ENCODE measurements at regions of chr6 and their contacts with region 1.

Region 1: DNA sequence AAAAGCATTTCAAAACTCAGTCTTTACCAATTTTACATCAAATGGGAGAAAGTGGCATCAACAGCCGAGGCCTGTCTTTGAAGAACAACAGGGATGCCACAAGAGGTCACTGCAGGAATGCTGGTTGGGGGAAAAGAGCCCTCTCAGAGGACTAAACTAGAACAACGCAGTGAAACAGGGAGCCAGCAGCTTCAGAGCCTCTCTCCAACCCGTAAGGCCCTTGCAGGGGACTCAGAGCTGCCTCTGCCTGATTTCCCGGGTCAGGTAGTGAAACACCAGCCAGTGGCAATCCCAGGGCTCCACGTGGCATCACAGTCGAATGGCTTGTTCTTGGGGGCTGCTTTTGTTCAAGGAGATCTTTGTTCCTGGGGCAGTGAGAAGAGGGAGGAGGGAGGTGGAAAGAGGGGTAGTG is 55.0 kb upstream of the KCNK16 start:
- DNase-seq: peak; percentile 42
- H3K4me3 ChIP-seq: no peak overlapping the region
- H3K27ac ChIP-seq: no peak overlapping the region
- H3K4me1 ChIP-seq: no peaks in the 10 kb centered on the region
- H3K27me3 ChIP-seq: no peaks in the 10 kb centered on the region
- CTCF ChIP-seq: peak; percentile 74 to 90

Region 2: GRCh38 chr6:39342692-39343395 is 34.7 kb before region 1 on chr6:
- CTCF ChIA-PET with region 1: no interaction called
- dilution Hi-C with region 1: no loop called
- in situ Hi-C with region 1: no loop called
- intact Hi-C with region 1: no loop called
- DNase-seq: no peak
- H3K4me3 ChIP-seq: no peak overlapping the region
- H3K27ac ChIP-seq: no peak overlapping the region
- H3K4me1 ChIP-seq: peaks cover 14% of the 10 kb centered on the region
- H3K27me3 ChIP-seq: no peaks in the 10 kb centered on the region
- CTCF ChIP-seq: no peak

Region 3: GRCh38 chr6:39865011-39865888 is 487.7 kb after region 1 on chr6:
- CTCF ChIA-PET with region 1: no interaction called
- dilution Hi-C with region 1: no loop called
- in situ Hi-C with region 1: no loop called
- intact Hi-C with region 1: loop called (anchors 1 kb)
- DNase-seq: peak; percentile 31
- H3K4me3 ChIP-seq: no peak overlapping the region
- H3K27ac ChIP-seq: no peak overlapping the region
- H3K4me1 ChIP-seq: no peaks in the 10 kb centered on the region
- H3K27me3 ChIP-seq: no peaks in the 10 kb centered on the region
- CTCF ChIP-seq: peak; percentile 69 to 82

Region 4: GRCh38 chr6:39887381-39888070 is 510.0 kb after region 1 on chr6:
- CTCF ChIA-PET with region 1: no interaction called
- dilution Hi-C with region 1: no loop called
- in situ Hi-C with region 1: loop called (anchors 10 kb)
- intact Hi-C with region 1: loop called (anchors 1 kb)
- DNase-seq: no peak
- H3K4me3 ChIP-seq: no peak overlapping the region
- H3K27ac ChIP-seq: no peak overlapping the region
- H3K4me1 ChIP-seq: no peaks in the 10 kb centered on the region
- H3K27me3 ChIP-seq: peaks cover 4% of the 10 kb centered on the region
- CTCF ChIP-seq: no peak

Region 5: DNA sequence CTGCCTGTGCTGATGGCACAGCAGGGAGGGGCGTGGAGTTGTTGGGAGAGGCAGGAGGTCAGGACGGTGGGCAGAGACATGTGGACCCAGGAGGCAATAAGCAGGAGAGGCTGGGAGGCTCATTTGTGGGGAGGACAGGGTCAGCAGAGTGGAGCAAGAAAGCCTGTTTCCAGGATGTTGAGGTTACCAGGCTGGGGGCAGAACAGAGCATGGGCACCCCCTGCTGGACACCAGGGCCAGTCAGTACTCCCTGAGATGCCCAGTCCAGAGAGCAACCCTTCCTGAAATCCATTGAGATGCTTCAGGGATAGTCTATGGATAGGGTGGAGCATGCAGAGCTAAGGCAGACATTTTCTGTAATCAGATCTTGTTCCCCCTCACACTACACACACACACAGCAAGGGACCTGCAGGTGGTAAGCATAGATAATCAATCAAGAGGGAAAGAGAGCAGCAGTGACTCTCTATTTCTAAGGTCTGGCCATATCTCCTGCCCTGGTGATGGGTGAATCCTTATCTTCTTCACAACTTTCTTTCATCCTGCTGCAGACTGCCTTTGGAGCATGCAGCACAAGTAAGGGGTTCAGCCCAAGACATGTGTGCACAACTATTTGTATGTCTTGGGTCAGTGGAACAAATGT is 515.1 kb after region 1 on chr6:
- CTCF ChIA-PET with region 1: no interaction called
- dilution Hi-C with region 1: no loop called
- in situ Hi-C with region 1: loop called (anchors 10 kb)
- intact Hi-C with region 1: loop called (anchors 1 kb)
- DNase-seq: peak; percentile 17
- H3K4me3 ChIP-seq: no peak overlapping the region
- H3K27ac ChIP-seq: no peak overlapping the region
- H3K4me1 ChIP-seq: no peaks in the 10 kb centered on the region
- H3K27me3 ChIP-seq: peaks cover 4% of the 10 kb centered on the region
- CTCF ChIP-seq: peak; percentile 69 to 81